ENCODE measurements at regions of chr9 and their contacts with region 1.

Region 1: DNA sequence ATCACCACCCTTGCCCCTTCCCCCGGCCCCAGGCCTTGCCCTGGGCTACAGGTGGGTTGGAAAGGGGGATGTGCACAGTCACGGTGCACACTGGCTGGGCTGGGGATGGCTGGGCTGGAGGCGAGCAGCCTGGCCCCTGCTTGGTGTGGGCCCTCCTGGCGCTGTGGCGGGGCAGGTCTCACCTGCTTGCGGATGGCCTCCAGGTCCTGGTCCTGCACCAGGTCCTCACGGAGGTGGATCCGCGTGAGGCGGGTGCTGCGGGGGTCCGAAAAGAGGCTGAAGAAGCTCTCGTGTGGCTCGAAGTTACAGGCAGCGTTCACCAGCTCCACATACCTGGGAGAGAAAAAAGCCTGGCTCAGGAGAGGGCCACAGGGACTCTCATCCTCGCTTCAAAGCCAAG is 18.1 kb downstream of the ZER1 start:
- DNase-seq: no peak
- H3K4me3 ChIP-seq: no peak overlapping the region
- H3K4me3 Mint-ChIP-seq: no peak overlapping the region
- H3K27ac Mint-ChIP-seq: no peak overlapping the region
- H3K4me1 ChIP-seq: no peaks in the 10 kb centered on the region
- H3K4me1 Mint-ChIP-seq: no peaks in the 10 kb centered on the region
- H3K27me3 ChIP-seq: no peaks in the 10 kb centered on the region
- H3K27me3 Mint-ChIP-seq: no peaks in the 10 kb centered on the region
- CTCF ChIP-seq: no peak

Region 2: DNA sequence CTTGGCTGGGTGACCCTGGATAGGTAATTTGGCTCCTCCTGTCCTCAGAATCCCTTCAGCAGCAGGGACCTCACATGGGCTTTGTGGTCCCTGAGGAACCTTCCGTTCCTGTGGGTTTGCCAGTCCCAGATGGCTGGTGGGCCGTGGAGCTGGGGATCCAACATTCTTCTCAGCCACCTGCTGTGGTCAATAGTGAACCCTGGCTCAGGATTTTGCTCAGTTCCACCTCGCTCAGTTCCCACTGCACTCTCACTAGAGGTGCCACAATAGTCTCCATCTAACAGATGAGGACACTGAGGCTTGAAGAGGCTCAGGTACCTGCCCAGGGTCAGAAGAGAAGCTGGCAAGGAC is 93.0 kb after region 1 on chr9:
- CTCF ChIA-PET with region 1: no interaction called
- POLR2A ChIA-PET with region 1: interaction called, 12 read pairs
- intact Hi-C with region 1: no loop called
- DNase-seq: no peak
- H3K4me3 ChIP-seq: no peak overlapping the region
- H3K4me3 Mint-ChIP-seq: no peak overlapping the region
- H3K27ac Mint-ChIP-seq: no peak overlapping the region
- H3K4me1 ChIP-seq: peaks cover 17% of the 10 kb centered on the region
- H3K4me1 Mint-ChIP-seq: peaks cover 4% of the 10 kb centered on the region
- H3K27me3 ChIP-seq: no peaks in the 10 kb centered on the region
- H3K27me3 Mint-ChIP-seq: no peaks in the 10 kb centered on the region
- CTCF ChIP-seq: no peak